IMR-90 (cell line): ENCODE measurements at regions of chr4 and their contacts with region 1.

Region 1: DNA sequence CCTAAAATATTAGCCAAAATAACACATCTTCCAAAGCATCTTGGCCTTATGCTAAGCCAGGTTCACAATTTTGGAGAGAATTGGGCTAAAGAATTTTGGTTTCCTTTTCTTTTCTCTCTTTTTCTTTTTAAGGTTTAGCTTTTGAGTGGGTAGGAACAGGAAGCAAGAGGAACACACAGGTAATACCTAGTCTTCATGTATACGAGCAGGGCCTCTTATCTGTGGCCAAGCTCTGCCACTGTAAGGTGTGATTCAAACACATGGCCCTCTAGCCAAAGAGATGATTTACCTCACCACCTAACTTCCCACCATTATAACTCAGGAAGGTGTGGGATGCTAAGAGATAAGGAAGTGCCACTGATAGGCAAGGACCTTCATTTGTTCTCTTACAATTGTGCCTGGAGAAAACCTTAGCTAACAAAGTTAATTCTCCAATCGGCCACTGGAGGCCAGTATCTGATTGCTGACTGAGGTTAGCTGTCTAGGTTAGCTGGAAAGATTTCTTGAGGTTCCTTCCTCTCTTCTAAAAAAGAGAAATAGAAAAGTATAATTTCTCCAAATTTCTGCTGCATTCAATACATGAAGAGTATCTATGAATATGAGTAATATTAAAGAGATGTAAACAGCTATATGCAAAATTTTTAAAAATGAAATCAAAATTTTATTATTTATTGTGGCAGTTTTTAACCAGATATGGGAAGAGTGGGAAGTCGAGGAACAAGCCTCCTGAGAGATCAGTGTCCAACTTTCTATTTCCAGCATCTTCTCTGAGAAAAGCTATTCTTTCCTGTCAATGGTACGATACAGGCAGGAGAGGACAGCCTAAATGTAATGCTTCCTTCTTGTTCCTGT is 30.1 kb upstream of the BBS7 start:
- DNase-seq: peak; percentile 61
- ATAC-seq: peak; percentile 89
- H3K4me3 ChIP-seq: no peak overlapping the region
- H3K27ac ChIP-seq: no peak overlapping the region
- H3K4me1 ChIP-seq: no peaks in the 10 kb centered on the region
- H3K27me3 ChIP-seq: no peaks in the 10 kb centered on the region
- CTCF ChIP-seq: peak; percentile 84
- POLR2A ChIP-seq: no peak
- RAD21 ChIP-seq: peak; percentile 94

Region 2: DNA sequence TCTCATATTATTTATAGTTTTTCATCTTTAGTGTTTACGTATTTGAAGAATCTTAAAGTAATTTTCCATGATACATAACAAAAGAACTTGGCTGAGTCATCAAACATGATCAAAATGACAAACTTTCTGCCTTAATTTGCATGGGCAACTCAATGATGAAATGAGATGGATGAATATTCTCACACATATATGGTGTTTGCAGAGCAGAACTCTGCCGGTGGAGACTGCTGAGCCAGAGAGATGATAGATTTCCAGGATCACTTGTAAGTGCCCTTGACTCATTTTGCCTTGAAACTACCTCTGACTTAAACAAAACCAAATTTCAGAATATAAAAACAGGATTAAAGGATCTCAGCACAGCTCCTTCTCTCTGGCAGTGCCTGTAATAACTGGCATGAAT is 13.3 kb after region 1 on chr4:
- CTCF ChIA-PET with region 1: no interaction called
- POLR2A ChIA-PET with region 1: no interaction called
- dilution Hi-C with region 1: no loop called
- in situ Hi-C with region 1: no loop called
- intact Hi-C with region 1: no loop called
- DNase-seq: peak; percentile 24
- ATAC-seq: peak; percentile 42
- H3K4me3 ChIP-seq: no peak overlapping the region
- H3K27ac ChIP-seq: no peak overlapping the region
- H3K4me1 ChIP-seq: no peaks in the 10 kb centered on the region
- H3K27me3 ChIP-seq: no peaks in the 10 kb centered on the region
- CTCF ChIP-seq: no peak
- POLR2A ChIP-seq: no peak
- RAD21 ChIP-seq: no peak

Region 3: GRCh38 chr4:121950212-121950679 is 49.9 kb after region 1 on chr4:
- CTCF ChIA-PET with region 1: interaction called, 5 read pairs
- POLR2A ChIA-PET with region 1: no interaction called
- dilution Hi-C with region 1: no loop called
- in situ Hi-C with region 1: no loop called
- intact Hi-C with region 1: loop called (anchors 2 kb)
- DNase-seq: peak; percentile 69
- ATAC-seq: peak; percentile 85
- H3K4me3 ChIP-seq: peak overlapping the region; percentile 76
- H3K27ac ChIP-seq: no peak overlapping the region
- H3K4me1 ChIP-seq: no peaks in the 10 kb centered on the region
- H3K27me3 ChIP-seq: no peaks in the 10 kb centered on the region
- CTCF ChIP-seq: peak; percentile 79
- POLR2A ChIP-seq: no peak
- RAD21 ChIP-seq: peak; percentile 78

Region 4: GRCh38 chr4:122218762-122219161 is 318.4 kb after region 1 on chr4:
- CTCF ChIA-PET with region 1: interaction called, 8 read pairs
- POLR2A ChIA-PET with region 1: no interaction called
- dilution Hi-C with region 1: no loop called
- in situ Hi-C with region 1: no loop called
- intact Hi-C with region 1: loop called (anchors 2 kb)
- DNase-seq: peak; percentile 7
- ATAC-seq: no peak
- H3K4me3 ChIP-seq: no peak overlapping the region
- H3K27ac ChIP-seq: no peak overlapping the region
- H3K4me1 ChIP-seq: no peaks in the 10 kb centered on the region
- H3K27me3 ChIP-seq: no peaks in the 10 kb centered on the region
- CTCF ChIP-seq: peak; percentile 42
- POLR2A ChIP-seq: no peak
- RAD21 ChIP-seq: peak; percentile 52

Region 5: DNA sequence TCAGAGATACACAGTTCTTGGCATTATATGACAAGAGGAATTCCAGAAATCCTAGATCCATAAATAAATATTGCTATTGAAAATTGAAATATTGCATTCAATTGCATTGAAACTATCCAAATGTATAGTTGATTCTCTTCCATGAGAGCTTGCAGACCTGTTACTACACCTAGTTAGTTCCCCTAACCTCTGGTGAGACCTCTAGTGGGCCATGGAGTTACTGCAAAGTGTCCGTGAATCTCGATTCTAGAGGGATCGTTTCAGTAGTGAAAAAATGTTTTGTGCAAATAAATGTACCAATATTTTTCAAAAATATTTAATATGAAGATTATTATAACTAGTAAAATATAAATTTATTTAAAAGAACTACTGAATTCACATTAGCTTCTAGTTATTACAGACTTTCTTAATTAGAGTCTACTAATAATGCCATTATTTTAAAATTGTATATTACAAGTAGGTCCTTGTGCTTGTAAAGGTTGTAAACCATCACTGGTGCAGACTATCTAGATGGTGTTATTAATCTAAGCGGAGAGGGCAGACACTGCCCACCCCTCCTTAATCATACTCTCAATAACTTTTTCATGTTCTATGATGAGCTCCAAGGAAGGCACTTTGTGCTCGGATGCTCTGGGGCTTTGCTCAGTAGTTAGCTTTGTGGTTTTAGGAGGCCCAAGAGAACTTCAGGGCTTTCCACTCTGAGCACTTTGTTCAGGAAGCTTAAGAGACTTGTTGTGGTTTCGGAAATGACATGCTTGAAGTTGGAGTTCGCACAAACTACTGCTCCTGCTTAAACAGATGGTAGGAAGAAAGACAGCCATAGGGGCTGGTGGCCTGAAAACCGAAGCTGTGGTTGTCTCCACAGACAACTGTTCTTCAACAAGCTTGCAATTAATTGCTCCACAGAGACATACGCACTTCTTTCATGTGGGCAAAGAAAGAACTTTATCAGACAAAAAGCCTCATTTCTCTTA is 677.7 kb after region 1 on chr4:
- CTCF ChIA-PET with region 1: interaction called, 11 read pairs
- POLR2A ChIA-PET with region 1: no interaction called
- dilution Hi-C with region 1: no loop called
- in situ Hi-C with region 1: loop called (anchors 25 kb)
- intact Hi-C with region 1: loop called (anchors 1 kb)
- DNase-seq: peak; percentile 38
- ATAC-seq: peak; percentile 72; the same call in 1 of the 2 replicates
- H3K4me3 ChIP-seq: no peak overlapping the region
- H3K27ac ChIP-seq: no peak overlapping the region
- H3K4me1 ChIP-seq: no peaks in the 10 kb centered on the region
- H3K27me3 ChIP-seq: no peaks in the 10 kb centered on the region
- CTCF ChIP-seq: peak; percentile 56
- POLR2A ChIP-seq: no peak
- RAD21 ChIP-seq: peak; percentile 40

Region 6: GRCh38 chr4:122716825-122717448 is 816.6 kb after region 1 on chr4:
- CTCF ChIA-PET with region 1: no interaction called
- POLR2A ChIA-PET with region 1: no interaction called
- dilution Hi-C with region 1: no loop called
- in situ Hi-C with region 1: loop called (anchors 25 kb)
- intact Hi-C with region 1: no loop called
- DNase-seq: peak; percentile 63
- ATAC-seq: peak; percentile 90
- H3K4me3 ChIP-seq: no peak overlapping the region
- H3K27ac ChIP-seq: no peak overlapping the region
- H3K4me1 ChIP-seq: no peaks in the 10 kb centered on the region
- H3K27me3 ChIP-seq: no peaks in the 10 kb centered on the region
- CTCF ChIP-seq: peak; percentile 86
- POLR2A ChIP-seq: no peak
- RAD21 ChIP-seq: peak; percentile 80